ENCODE measurements at regions of chr6 and their contacts with region 1.

Region 1: GRCh38 chr6:22432060-22432459 is 135.2 kb upstream of the PRL start:
- DNase-seq: no peak
- H3K4me3 ChIP-seq: no peak overlapping the region
- H3K27ac ChIP-seq: no peak overlapping the region
- H3K4me1 ChIP-seq: peaks cover 5% of the 10 kb centered on the region
- H3K27me3 ChIP-seq: no peaks in the 10 kb centered on the region
- CTCF ChIP-seq: no peak

Region 2: GRCh38 chr6:22372922-22373321 is 59.1 kb before region 1 on chr6:
- CTCF ChIA-PET with region 1: no interaction called
- dilution Hi-C with region 1: no loop called
- in situ Hi-C with region 1: no loop called
- intact Hi-C with region 1: no loop called
- DNase-seq: no peak
- H3K4me3 ChIP-seq: no peak overlapping the region
- H3K27ac ChIP-seq: no peak overlapping the region
- H3K4me1 ChIP-seq: no peaks in the 10 kb centered on the region
- H3K27me3 ChIP-seq: no peaks in the 10 kb centered on the region
- CTCF ChIP-seq: no peak

Region 3: GRCh38 chr6:22399701-22400100 is 32.4 kb before region 1 on chr6:
- CTCF ChIA-PET with region 1: interaction called, 14 read pairs
- dilution Hi-C with region 1: no loop called
- in situ Hi-C with region 1: no loop called
- intact Hi-C with region 1: no loop called
- DNase-seq: peak; percentile 13
- H3K4me3 ChIP-seq: no peak overlapping the region
- H3K27ac ChIP-seq: no peak overlapping the region
- H3K4me1 ChIP-seq: no peaks in the 10 kb centered on the region
- H3K27me3 ChIP-seq: no peaks in the 10 kb centered on the region
- CTCF ChIP-seq: no peak

Region 4: GRCh38 chr6:22917344-22917743 is 485.3 kb after region 1 on chr6:
- CTCF ChIA-PET with region 1: no interaction called
- dilution Hi-C with region 1: no loop called
- in situ Hi-C with region 1: no loop called
- intact Hi-C with region 1: no loop called
- DNase-seq: no peak
- H3K4me3 ChIP-seq: no peak overlapping the region
- H3K27ac ChIP-seq: no peak overlapping the region
- H3K4me1 ChIP-seq: no peaks in the 10 kb centered on the region
- H3K27me3 ChIP-seq: no peaks in the 10 kb centered on the region
- CTCF ChIP-seq: no peak